ENCODE measurements at regions of chr15 and their contacts with region 1.

Region 1: DNA sequence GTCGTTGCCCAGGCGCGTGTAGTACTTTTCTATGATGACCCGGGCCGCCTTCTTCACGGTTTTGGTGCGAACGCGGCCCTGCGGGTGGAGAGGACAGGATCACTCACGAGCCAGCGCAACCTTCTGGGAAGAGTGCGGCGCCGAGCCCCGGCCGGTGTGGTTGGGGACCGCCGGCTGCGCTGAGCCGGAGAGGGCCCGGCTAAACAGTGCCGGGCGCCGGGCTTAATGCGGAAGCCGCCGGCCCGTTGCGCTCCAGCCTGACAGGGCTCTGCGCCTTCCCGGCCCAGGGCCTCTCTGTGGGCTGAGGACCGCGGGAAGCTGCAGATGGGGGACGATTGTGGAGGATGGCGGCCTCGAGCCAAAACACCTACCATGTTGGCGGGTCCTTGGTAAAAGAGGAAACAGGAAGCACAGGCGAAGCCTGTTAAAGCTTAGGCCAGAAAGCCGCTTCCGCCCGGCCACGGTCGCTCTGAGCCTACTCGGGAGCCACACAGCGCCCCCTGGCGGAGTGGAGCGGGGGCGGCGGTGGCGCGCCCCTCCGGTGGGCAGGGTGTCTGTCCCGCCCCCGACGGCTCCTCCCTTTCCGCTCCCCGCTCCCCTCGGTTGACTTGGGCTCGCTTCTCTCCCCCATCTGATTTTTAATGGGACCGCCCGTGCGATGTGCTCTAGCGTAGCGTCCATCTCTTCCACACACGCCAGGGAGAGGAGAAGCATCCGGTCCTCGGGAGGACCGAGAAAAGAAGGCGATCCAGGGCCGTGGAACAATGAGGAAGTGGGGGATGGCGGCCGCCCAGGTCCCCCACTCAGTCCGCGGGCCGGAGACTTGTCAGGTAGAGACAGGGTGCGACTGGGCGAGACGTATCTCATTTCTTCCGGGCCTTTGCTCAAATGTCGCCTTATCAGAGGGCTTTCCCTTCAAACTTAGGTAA is at the start of gene RPS17:
- DNase-seq: peak; percentile 88 to 97 (median 94)
- H3K4me3 ChIP-seq: peak within 1 kb of the TSS; percentile 66 to 98 (median 86)
- H3K27ac ChIP-seq: peak within 1 kb of the TSS; percentile 45 to 96 (median 88)
- H3K27me3 ChIP-seq: no peaks in the 10 kb centered on the region
- CTCF ChIP-seq: peak; percentile 96 to 100 (median 99)
- total RNA-seq, gene RPS17: 255 to 518 (median 371) TPM

Region 2: DNA sequence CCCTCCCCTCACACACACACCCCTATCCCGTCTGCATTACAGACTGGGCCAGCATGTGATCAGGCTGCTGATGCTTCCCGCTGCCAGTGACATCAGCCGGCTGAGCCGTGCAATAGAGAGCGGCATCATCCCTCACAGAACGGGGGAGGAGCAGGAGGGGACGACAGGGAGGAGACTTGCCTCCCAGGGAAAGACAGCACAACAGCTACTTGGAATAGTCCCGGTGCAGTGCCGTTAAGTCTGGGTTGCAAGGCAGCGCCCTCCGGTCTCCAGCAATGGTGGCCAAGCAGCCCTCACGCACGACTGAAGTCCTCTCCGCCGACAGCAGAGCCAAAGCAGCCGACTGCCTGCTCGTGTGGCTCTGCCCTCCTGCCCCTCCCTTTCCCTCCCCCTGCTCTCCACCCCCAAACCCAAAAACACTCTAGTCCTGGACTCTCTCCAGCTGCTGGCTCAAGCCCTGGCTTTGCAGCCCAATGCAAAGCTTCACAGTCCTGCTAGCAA is 31.5 kb after region 1 on chr15:
- intact Hi-C with region 1: loop called in 1 of 2 experiments (anchors 2 kb)
- DNase-seq: peak; percentile 68 to 93 (median 88)
- H3K4me3 ChIP-seq: peak overlapping the region; percentile 38 to 78 (median 62)
- H3K27ac ChIP-seq: peak overlapping the region; percentile 67 to 95 (median 89)
- H3K27me3 ChIP-seq: no peaks in the 10 kb centered on the region
- CTCF ChIP-seq: peak in 10 of 56 donors; percentile 8 to 34 (median 18)

Region 3: DNA sequence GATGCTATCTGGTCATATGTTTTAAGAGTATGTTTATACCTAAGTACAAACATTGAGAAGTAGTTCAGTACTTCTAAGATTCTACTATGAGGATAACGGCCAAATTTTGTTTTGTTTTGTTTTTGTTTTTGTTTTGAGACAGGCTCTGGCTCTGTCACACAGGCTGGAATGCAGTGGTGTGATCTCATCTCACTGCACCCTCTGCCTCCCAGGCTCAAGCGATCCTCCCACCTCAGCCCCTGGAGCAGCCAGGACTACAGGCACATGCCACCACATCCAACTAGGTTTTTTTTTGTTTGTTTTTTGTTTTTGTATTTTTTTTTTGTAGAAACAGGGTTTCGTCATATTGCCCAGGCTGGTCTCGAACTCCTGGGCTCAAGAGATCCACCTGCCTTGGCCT is 47.5 kb after region 1 on chr15:
- intact Hi-C with region 1: no loop called
- DNase-seq: no peak
- H3K4me3 ChIP-seq: no peak overlapping the region
- H3K27ac ChIP-seq: no peak overlapping the region
- H3K27me3 ChIP-seq: no peaks in the 10 kb centered on the region
- CTCF ChIP-seq: no peak

Region 4: DNA sequence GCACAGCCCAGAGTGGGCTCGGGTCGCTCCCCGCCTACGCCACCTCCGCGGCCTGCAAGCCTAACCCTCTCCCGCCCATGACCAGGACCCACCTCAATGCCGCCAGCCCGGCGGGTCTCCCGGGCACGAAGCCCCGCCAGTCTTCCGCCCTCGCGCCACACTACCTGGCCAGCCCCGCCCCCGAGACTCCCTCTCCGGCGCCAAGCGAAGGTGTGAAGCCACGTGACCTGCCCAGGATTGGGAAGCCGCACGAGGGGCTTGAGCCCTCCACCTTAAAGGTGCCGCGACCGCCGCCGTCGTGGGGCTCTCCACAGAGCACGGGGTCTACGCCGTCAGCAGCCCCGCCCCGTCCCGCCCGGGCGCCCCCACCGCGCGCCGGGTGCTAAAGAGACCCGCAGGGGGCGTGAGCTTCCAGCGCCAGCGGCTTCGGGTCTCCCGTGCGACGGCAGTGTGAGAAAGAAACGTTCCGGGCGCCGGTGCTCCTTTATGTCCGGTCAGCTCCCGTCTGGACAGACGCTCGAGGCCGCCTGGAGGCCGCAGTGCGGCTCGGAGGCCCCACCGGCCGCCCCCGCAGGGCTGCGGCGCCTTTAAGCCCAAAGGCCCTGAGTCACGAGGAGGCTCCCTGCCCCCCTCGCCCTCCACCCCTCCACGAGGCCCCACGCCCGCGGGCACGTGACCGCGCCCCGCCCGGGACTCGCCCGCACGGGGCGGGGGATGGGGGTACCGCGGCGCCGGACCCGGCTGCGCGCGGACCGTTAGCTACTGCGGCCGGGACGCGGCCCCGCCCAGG is 106.9 kb after region 1 on chr15 and contains the start of gene CPEB1:
- intact Hi-C with region 1: loop called (anchors 1 to 2 kb)
- DNase-seq: peak; percentile 24 to 84 (median 76)
- H3K4me3 ChIP-seq: peak within 1 kb of the TSS; percentile 42 to 88 (median 75)
- H3K27ac ChIP-seq: peak within 1 kb of the TSS; percentile 67 to 98 (median 92)
- H3K27me3 ChIP-seq: peaks cover 0 to 5% (median 0%) of the 10 kb centered on the region in 45 donors
- CTCF ChIP-seq: peak in 48 of 56 donors; percentile 9 to 62 (median 41)
- total RNA-seq, gene CPEB1: 36.0 to 80.0 (median 62.0) TPM

Region 5: DNA sequence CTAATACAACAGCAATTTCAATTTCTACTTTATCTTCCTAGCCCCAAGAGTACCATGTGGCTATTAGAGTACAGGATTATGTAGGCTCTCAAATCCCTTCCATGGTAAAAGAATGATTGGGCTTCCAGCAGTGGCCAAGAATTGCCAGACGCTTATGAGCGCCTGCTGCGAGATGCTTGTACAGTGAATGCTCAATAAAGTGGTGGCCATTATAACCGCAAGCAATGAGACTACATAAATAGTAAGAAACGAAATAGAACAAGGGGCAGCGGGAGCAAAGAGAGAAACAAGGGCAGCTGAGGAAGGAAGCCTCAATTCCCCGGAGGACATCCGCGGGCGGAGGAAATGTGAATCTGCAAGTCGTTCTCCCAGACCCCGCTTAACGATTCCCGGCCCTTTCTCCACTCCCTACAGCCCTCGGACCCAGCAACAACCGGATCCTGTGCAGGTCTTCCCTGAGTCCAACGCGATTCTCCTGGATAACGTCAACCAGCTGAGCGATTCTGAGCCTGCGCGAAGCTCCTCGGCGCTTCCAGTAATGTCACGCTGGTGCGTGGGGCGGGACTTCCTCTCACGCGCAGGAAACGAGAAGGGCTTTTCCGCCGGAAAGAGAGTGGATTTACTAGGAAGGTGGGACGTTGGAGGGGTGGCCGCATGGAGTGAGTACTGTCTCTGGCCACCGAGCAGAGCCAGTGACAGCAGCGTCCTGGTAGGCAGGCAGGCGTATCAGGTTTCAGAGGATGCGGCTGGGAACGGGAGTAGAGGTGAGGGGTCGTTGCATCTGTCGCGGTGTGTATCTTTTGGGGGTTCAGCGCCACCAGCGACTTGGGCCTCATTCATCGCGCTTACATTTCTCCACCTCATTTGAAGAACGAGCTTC is 209.9 kb after region 1 on chr15:
- intact Hi-C with region 1: loop called (anchors 5 kb)
- DNase-seq: peak; percentile 89 to 97 (median 94)
- H3K4me3 ChIP-seq: peak overlapping the region; percentile 57 to 99 (median 91)
- H3K27ac ChIP-seq: peak overlapping the region; percentile 63 to 98 (median 92)
- H3K27me3 ChIP-seq: no peaks in the 10 kb centered on the region
- CTCF ChIP-seq: peak in 28 of 56 donors; percentile 7 to 57 (median 26)

Region 6: GRCh38 chr15:82809404-82810060 is 269.2 kb after region 1 on chr15 and contains the start of gene WHAMM:
- intact Hi-C with region 1: loop called (anchors 1 to 5 kb)
- DNase-seq: peak; percentile 97 to 99 (median 98)
- H3K4me3 ChIP-seq: peak within 1 kb of the TSS; percentile 61 to 95 (median 86)
- H3K27ac ChIP-seq: peak within 1 kb of the TSS; percentile 90 to 100 (median 97)
- H3K27me3 ChIP-seq: no peaks in the 10 kb centered on the region
- CTCF ChIP-seq: peak in 29 of 56 donors; percentile 11 to 51 (median 27)
- total RNA-seq, gene WHAMM: 7.8 to 16.0 (median 11.1) TPM

Region 7: DNA sequence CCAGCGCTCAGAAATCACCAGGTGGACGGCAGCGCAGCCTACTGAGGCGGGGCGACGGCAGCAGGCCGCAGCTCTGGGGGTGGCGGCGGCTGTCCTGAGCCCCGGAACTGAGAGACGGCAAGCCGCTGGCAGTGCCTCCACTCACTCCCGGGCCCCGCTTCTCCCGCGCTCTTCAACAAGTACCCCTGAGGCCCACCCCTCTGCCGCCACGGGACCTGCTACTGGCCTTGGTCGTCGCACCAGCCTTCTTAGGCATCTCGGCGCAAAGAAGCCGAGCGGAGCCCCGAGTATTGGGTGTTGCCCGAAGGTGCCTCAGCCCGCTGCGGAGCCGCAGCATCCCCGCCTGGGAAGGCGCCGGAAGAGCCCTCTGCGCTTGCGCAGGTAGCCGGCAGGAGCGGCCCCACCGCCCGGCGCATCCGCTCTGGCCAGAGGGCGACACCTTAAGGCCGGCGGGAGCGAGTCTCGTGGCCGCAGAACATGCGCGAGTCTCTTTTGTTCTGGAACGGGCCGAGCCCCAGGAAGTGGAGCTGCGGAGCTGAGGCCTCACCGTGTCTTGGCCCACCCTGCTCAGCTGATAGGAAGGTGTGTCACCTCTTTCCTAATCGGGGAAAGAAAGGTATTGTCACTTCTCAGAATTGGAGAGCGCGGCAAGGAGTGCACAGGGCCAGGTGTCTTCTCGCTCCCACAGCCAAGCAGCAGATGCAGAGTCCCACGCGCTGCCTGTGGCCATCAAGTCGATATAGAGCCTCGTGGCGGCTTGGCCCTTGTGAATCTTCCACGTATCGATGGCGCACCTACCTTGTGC is 471.2 kb after region 1 on chr15 and contains the start of gene C15orf40:
- intact Hi-C with region 1: loop called in 1 of 2 experiments (anchors 5 kb)
- DNase-seq: peak; percentile 80 to 93 (median 90)
- H3K4me3 ChIP-seq: peak within 1 kb of the TSS; percentile 72 to 100 (median 95)
- H3K27ac ChIP-seq: peak within 1 kb of the TSS; percentile 42 to 95 (median 87)
- H3K27me3 ChIP-seq: no peaks in the 10 kb centered on the region
- CTCF ChIP-seq: peak; percentile 57 to 94 (median 83)
- total RNA-seq, gene C15orf40: 15.7 to 34.4 (median 22.5) TPM

Measured in dorsolateral prefrontal cortex (tissue), 120 donors.